ENCODE measurements at regions of chr17 and their contacts with region 1.

Region 1: GRCh38 chr17:45385331-45385997 is 47.2 kb downstream of the ARHGAP27 start:
- DNase-seq: peak; percentile 56
- ATAC-seq: peak; percentile 98
- H3K4me3 ChIP-seq: no peak overlapping the region
- H3K27ac ChIP-seq: 0 out of 2 replicates have a peak overlapping the region, but pooled peaks have one; percentile 50
- H3K4me1 ChIP-seq: peaks cover 15% of the 10 kb centered on the region
- H3K27me3 ChIP-seq: no peaks in the 10 kb centered on the region
- CTCF ChIP-seq: peak; percentile 99; a peak in 5 of 6 replicates
- EP300 ChIP-seq: no peak
- POLR2A ChIP-seq: no peak
- RAD21 ChIP-seq: peak; percentile 100

Region 2: DNA sequence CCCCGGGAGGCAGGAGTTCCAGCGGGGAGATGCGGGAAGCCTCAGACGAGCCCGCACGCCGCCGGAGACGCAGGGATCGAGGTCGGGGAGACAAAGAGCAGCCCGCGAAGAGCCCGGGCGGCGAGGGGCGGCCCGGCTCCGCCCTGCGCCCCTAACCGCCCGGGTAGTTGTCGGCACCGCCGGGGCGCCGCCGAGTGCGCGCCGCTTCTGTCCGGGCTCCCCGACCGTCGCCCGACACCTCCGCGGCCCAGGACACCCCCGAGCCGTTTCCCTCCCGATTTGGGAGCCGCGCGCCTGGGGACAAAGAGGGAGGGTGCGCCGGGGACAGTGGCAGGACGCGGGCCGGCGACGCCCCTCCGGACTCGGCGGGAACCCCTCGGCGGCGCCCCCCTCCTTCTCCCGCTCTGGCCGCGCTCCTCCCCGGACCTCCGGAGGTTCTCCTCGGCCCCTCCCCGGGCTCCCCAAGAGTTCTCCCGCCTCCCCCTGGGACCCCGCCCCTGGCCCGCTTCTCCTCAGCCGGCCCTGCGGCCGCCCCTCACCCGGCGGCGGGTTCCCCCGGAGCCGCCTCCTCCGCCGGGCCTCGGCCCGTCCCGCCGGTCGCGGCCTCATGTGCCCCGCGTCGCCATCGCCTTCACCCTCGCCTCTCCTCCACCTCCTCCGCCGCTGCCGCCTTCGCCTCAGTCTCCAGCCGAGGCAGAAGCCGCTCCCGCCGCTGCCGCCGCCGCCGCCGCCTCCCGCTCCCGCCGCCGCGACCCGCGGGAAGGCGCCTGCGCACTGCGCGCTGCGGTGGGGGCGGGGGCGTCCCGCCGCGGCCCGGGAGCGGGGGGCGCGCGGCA is 555.7 kb before region 1 on chr17 and contains the start of gene GJC1:
- CTCF ChIA-PET with region 1: no interaction called
- POLR2A ChIA-PET with region 1: no interaction called
- RAD21 ChIA-PET with region 1: no interaction called
- SMC1A ChIA-PET with region 1: no interaction called
- in situ Hi-C with region 1: no loop called
- intact Hi-C with region 1: no loop called
- DNase-seq: no peak
- ATAC-seq: peak; percentile 71
- H3K4me3 ChIP-seq: peak within 1 kb of the TSS; percentile 44; the same call in 1 of the 2 replicates
- H3K27ac ChIP-seq: no peak within 1 kb of the TSS
- H3K4me1 ChIP-seq: no peaks in the 10 kb centered on the region
- H3K27me3 ChIP-seq: peaks cover 0 to 7% of the 10 kb centered on the region in 2 experiments; a peak in 3 of 4 replicates
- CTCF ChIP-seq: no peak
- EP300 ChIP-seq: no peak
- POLR2A ChIP-seq: no peak
- RAD21 ChIP-seq: no peak
- polyA plus RNA-seq, gene GJC1: 0.37 to 0.69 TPM

Region 3: GRCh38 chr17:45228763-45229539 is 156.5 kb before region 1 on chr17:
- CTCF ChIA-PET with region 1: interaction called, 11 read pairs
- POLR2A ChIA-PET with region 1: no interaction called
- RAD21 ChIA-PET with region 1: interaction called, 8 read pairs
- SMC1A ChIA-PET with region 1: interaction called, 5 read pairs
- in situ Hi-C with region 1: no loop called
- intact Hi-C with region 1: no loop called
- DNase-seq: peak; percentile 68
- ATAC-seq: peak; percentile 56
- H3K4me3 ChIP-seq: peak overlapping the region; percentile 89
- H3K27ac ChIP-seq: peak overlapping the region; percentile 100
- H3K4me1 ChIP-seq: peaks cover 66% of the 10 kb centered on the region
- H3K27me3 ChIP-seq: no peaks in the 10 kb centered on the region
- CTCF ChIP-seq: no peak
- EP300 ChIP-seq: peak; percentile 84 to 91; a peak in 2 of 4 replicates
- POLR2A ChIP-seq: peak; percentile 75
- RAD21 ChIP-seq: no peak

Region 4: GRCh38 chr17:45277216-45277849 is 108.1 kb before region 1 on chr17:
- CTCF ChIA-PET with region 1: interaction called, 291 read pairs
- POLR2A ChIA-PET with region 1: interaction called, 10 read pairs
- RAD21 ChIA-PET with region 1: interaction called, 150 read pairs
- SMC1A ChIA-PET with region 1: interaction called, 184 read pairs
- in situ Hi-C with region 1: loop called (anchors 5 kb)
- intact Hi-C with region 1: loop called (anchors 1 kb)
- DNase-seq: peak; percentile 66
- ATAC-seq: peak; percentile 99
- H3K4me3 ChIP-seq: no peak overlapping the region
- H3K27ac ChIP-seq: 0 out of 2 replicates have a peak overlapping the region, but pooled peaks have one; percentile 22
- H3K4me1 ChIP-seq: peaks cover 4% of the 10 kb centered on the region; the same call in 1 of the 2 replicates
- H3K27me3 ChIP-seq: no peaks in the 10 kb centered on the region
- CTCF ChIP-seq: peak; percentile 73 to 85 (median 81)
- EP300 ChIP-seq: no peak
- POLR2A ChIP-seq: no peak
- RAD21 ChIP-seq: peak; percentile 94

Region 5: GRCh38 chr17:45293413-45294211 is 91.9 kb before region 1 on chr17:
- CTCF ChIA-PET with region 1: interaction called, 34 read pairs
- POLR2A ChIA-PET with region 1: interaction called, 3 read pairs
- RAD21 ChIA-PET with region 1: interaction called, 15 read pairs
- SMC1A ChIA-PET with region 1: interaction called, 13 read pairs
- in situ Hi-C with region 1: no loop called
- intact Hi-C with region 1: no loop called
- DNase-seq: no peak
- ATAC-seq: peak; percentile 63
- H3K4me3 ChIP-seq: no peak overlapping the region
- H3K27ac ChIP-seq: peak overlapping the region; percentile 42
- H3K4me1 ChIP-seq: peaks cover 76% of the 10 kb centered on the region
- H3K27me3 ChIP-seq: no peaks in the 10 kb centered on the region
- CTCF ChIP-seq: peak in 1 of 3 experiments; percentile 11; a peak in 1 of 6 replicates
- EP300 ChIP-seq: no peak
- POLR2A ChIP-seq: no peak
- RAD21 ChIP-seq: no peak

Region 6: DNA sequence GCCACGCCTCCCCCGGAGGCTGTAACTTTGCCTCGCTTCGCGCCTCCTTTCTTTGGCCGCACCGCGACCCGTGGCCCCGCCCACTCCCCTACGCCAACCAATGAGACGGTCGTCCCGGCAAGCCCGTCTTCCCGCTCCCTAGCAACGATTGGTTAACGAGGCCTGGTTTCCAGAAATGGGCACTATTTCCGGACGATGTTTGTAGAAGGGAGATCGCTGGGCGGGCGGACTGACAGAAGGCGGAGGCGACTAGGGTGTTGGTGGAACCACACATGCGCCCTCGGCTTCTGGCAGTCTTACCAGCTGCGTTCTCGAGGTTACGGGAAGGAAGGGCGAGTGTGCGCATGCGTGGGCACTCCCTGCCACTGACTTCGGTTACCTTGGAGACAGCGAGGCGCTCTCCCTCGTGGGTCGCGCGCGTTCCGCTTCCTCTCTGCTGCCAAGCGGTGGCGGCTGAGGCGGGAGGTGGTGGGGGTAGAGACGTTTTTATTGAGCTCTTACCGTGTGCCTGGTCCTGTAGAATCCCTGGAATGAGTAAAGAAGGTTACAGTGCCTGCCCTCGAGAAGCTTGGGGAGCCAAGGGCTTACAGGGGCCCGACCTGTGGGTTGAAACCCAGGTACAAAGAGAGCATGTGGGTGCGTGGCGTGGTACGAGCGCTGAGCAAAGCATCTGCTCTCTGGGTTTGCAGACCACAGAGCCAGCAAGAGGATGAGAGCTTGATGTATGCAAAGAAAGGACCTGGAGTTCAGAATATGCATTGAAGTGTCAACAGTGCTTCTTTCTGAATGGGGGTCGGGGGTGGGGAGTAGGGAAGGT is 68.1 kb before region 1 on chr17:
- CTCF ChIA-PET with region 1: interaction called, 43 read pairs
- POLR2A ChIA-PET with region 1: interaction called, 6 read pairs
- RAD21 ChIA-PET with region 1: interaction called, 107 read pairs
- SMC1A ChIA-PET with region 1: interaction called, 24 read pairs
- in situ Hi-C with region 1: no loop called
- intact Hi-C with region 1: loop called (anchors 2 kb)
- DNase-seq: peak; percentile 100
- ATAC-seq: peak; percentile 81
- H3K4me3 ChIP-seq: peak overlapping the region; percentile 92
- H3K27ac ChIP-seq: peak overlapping the region; percentile 91
- H3K4me1 ChIP-seq: peaks cover 39% of the 10 kb centered on the region
- H3K27me3 ChIP-seq: no peaks in the 10 kb centered on the region
- CTCF ChIP-seq: no peak
- EP300 ChIP-seq: no peak
- POLR2A ChIP-seq: peak; percentile 61
- RAD21 ChIP-seq: no peak

Region 7: GRCh38 chr17:45357364-45357997 is 28.0 kb before region 1 on chr17:
- CTCF ChIA-PET with region 1: interaction called, 6 read pairs
- POLR2A ChIA-PET with region 1: interaction called, 4 read pairs
- RAD21 ChIA-PET with region 1: no interaction called
- SMC1A ChIA-PET with region 1: interaction called, 12 read pairs
- in situ Hi-C with region 1: no loop called
- intact Hi-C with region 1: no loop called
- DNase-seq: peak; percentile 63
- ATAC-seq: peak; percentile 80
- H3K4me3 ChIP-seq: no peak overlapping the region
- H3K27ac ChIP-seq: peak overlapping the region; percentile 91
- H3K4me1 ChIP-seq: peaks cover 23% of the 10 kb centered on the region
- H3K27me3 ChIP-seq: no peaks in the 10 kb centered on the region
- CTCF ChIP-seq: no peak
- EP300 ChIP-seq: peak; percentile 24 to 40; a peak in 1 of 4 replicates
- POLR2A ChIP-seq: no peak
- RAD21 ChIP-seq: peak; percentile 14; the same call in 1 of the 2 replicates

Region 8: GRCh38 chr17:45410144-45411091 is 25.0 kb after region 1 on chr17:
- CTCF ChIA-PET with region 1: interaction called, 10 read pairs
- POLR2A ChIA-PET with region 1: no interaction called
- RAD21 ChIA-PET with region 1: interaction called, 3 read pairs
- SMC1A ChIA-PET with region 1: interaction called, 6 read pairs
- in situ Hi-C with region 1: no loop called
- intact Hi-C with region 1: no loop called
- DNase-seq: no peak
- ATAC-seq: peak; percentile 73
- H3K4me3 ChIP-seq: peak overlapping the region; percentile 89
- H3K27ac ChIP-seq: peak overlapping the region; percentile 92
- H3K4me1 ChIP-seq: peaks cover 48% of the 10 kb centered on the region
- H3K27me3 ChIP-seq: no peaks in the 10 kb centered on the region
- CTCF ChIP-seq: no peak
- EP300 ChIP-seq: no peak
- POLR2A ChIP-seq: peak; percentile 77
- RAD21 ChIP-seq: no peak